Caco-2 (cell line): ENCODE measurements at regions of chr12 and their contacts with region 1.

Region 1: GRCh38 chr12:113310489-113310888 is 24.4 kb downstream of the SLC8B1 start:
- DNase-seq: peak in 1 of 2 experiments; percentile 27
- H3K4me3 ChIP-seq: no peak overlapping the region
- H3K4me3 Mint-ChIP-seq: no peak overlapping the region
- H3K27ac Mint-ChIP-seq: no peak overlapping the region
- H3K4me1 ChIP-seq: no peaks in the 10 kb centered on the region
- H3K4me1 Mint-ChIP-seq: no peaks in the 10 kb centered on the region
- H3K27me3 ChIP-seq: no peaks in the 10 kb centered on the region
- H3K27me3 Mint-ChIP-seq: no peaks in the 10 kb centered on the region
- CTCF ChIP-seq: no peak

Region 2: GRCh38 chr12:113232840-113233585 is 77.5 kb before region 1 on chr12:
- CTCF ChIA-PET with region 1: no interaction called
- POLR2A ChIA-PET with region 1: no interaction called
- intact Hi-C with region 1: no loop called
- DNase-seq: no peak
- H3K4me3 ChIP-seq: no peak overlapping the region
- H3K4me3 Mint-ChIP-seq: no peak overlapping the region
- H3K27ac Mint-ChIP-seq: peak overlapping the region; percentile 66
- H3K4me1 ChIP-seq: peaks cover 58% of the 10 kb centered on the region
- H3K4me1 Mint-ChIP-seq: peaks cover 42% of the 10 kb centered on the region
- H3K27me3 ChIP-seq: no peaks in the 10 kb centered on the region
- H3K27me3 Mint-ChIP-seq: no peaks in the 10 kb centered on the region
- CTCF ChIP-seq: no peak

Region 3: DNA sequence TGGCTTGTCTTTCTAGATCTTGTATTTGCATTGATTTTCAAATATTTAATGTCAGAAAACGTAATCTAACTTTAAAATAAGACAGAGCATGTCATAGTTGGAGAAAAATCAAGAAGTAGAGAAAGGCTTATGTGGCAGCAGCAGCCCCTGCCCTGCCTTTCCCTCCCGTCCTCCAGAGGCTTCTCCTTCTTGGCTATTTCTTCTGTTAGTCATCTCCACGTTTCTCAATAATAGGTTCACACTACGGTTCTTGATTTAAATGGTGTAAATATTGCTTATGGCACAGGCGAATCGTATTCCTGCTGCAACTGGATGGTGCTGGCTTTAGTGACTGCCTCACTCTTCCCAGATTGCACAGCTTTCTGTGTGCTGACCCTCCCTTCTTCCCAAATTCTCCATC is 18.4 kb before region 1 on chr12:
- CTCF ChIA-PET with region 1: no interaction called
- POLR2A ChIA-PET with region 1: no interaction called
- intact Hi-C with region 1: no loop called
- DNase-seq: no peak
- H3K4me3 ChIP-seq: no peak overlapping the region
- H3K4me3 Mint-ChIP-seq: no peak overlapping the region
- H3K27ac Mint-ChIP-seq: no peak overlapping the region
- H3K4me1 ChIP-seq: no peaks in the 10 kb centered on the region
- H3K4me1 Mint-ChIP-seq: no peaks in the 10 kb centered on the region
- H3K27me3 ChIP-seq: no peaks in the 10 kb centered on the region
- H3K27me3 Mint-ChIP-seq: no peaks in the 10 kb centered on the region
- CTCF ChIP-seq: no peak

Region 4: DNA sequence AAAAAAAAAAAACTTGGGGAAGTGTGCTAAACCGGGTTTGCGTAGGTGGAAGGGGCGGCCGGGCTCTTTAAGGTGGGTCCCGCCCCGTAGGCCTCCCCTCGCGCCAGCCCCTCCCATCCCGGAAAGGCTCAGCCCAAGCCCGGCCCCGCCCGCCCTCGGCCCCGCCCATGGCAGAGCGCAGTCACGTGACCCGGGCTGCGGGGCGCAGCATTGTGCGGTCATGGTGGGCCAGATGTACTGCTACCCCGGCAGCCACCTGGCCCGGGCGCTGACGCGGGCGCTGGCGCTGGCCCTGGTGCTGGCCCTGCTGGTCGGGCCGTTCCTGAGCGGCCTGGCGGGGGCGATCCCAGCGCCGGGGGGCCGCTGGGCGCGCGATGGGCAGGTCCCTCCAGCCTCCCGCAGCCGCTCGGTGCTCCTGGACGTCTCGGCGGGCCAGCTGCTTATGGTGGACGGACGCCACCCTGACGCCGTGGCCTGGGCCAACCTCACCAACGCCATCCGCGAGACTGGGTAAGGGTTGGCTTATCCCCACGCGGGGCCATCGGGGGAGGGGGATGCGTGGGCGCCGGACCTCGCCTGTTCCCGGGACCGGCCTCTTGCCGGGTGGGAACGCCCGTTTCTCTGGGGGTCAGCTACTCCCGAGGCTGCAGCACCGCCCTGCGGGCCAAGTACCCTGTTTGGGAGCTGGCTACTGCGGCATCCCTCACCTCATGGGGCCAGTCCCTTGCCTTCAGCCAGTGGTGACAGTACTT is 48.1 kb after region 1 on chr12 and contains the start of gene PLBD2:
- CTCF ChIA-PET with region 1: interaction called, 3 read pairs
- POLR2A ChIA-PET with region 1: no interaction called
- intact Hi-C with region 1: loop called (anchors 2 kb)
- DNase-seq: peak; percentile 94 to 95
- H3K4me3 ChIP-seq: peak within 1 kb of the TSS; percentile 76
- H3K4me3 Mint-ChIP-seq: peak within 1 kb of the TSS; percentile 78
- H3K27ac Mint-ChIP-seq: peak within 1 kb of the TSS; percentile 14
- H3K4me1 ChIP-seq: peaks cover 10% of the 10 kb centered on the region
- H3K4me1 Mint-ChIP-seq: peaks cover 13% of the 10 kb centered on the region
- H3K27me3 ChIP-seq: no peaks in the 10 kb centered on the region
- H3K27me3 Mint-ChIP-seq: no peaks in the 10 kb centered on the region
- CTCF ChIP-seq: no peak
- total RNA-seq, gene PLBD2: 41.1 and 43.1 TPM in 2 replicates